GM12878 (cell line): ENCODE measurements at regions of chr5 and their contacts with region 1.

Region 1: DNA sequence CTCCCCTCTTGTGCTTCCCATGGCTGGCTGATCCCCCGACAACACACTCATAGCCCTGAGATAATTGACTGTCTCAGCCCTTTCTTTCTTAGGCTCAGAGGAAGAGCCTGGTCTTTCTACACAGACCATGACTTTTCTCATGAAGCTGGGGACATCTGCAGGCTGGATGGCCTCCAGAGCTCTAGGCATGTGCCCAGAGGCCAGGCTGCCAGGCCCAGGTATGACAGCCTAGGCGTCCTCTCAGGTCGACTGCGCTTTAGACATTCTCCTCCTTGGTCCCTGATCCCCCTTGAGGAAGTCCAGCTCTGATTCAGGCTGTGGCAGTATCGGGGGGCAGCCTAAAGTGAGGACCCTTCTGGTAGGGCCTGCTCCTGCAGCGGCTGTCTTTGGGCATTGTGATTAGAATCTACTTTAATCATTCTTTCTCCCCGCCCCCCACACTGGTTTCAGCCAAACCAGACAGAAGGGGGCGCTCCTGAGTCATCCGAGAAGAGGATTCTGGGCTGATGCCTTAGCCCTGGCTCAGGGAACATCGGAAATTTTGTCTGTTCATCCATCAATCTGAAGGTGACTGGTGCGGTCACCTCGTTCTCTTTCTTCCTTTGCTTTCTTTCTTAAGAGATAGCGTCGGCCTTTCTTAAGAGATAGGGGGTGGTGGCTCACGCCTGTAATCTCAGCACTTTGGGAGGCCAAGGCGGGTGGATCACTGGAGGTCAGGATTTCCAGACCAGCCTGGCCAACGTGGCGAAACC is 66.5 kb upstream of the HSPA9 start:
- DNase-seq: no peak
- ATAC-seq: peak; percentile 91
- H3K4me3 ChIP-seq: no peak overlapping the region
- H3K27ac ChIP-seq: no peak overlapping the region
- H3K4me1 ChIP-seq: no peaks in the 10 kb centered on the region
- H3K27me3 ChIP-seq: no peaks in the 10 kb centered on the region; a peak in 2 of 4 replicates
- CTCF ChIP-seq: peak; percentile 71 to 78 (median 72)
- EP300 ChIP-seq: no peak
- POLR2A ChIP-seq: no peak
- RAD21 ChIP-seq: peak; percentile 86

Region 2: DNA sequence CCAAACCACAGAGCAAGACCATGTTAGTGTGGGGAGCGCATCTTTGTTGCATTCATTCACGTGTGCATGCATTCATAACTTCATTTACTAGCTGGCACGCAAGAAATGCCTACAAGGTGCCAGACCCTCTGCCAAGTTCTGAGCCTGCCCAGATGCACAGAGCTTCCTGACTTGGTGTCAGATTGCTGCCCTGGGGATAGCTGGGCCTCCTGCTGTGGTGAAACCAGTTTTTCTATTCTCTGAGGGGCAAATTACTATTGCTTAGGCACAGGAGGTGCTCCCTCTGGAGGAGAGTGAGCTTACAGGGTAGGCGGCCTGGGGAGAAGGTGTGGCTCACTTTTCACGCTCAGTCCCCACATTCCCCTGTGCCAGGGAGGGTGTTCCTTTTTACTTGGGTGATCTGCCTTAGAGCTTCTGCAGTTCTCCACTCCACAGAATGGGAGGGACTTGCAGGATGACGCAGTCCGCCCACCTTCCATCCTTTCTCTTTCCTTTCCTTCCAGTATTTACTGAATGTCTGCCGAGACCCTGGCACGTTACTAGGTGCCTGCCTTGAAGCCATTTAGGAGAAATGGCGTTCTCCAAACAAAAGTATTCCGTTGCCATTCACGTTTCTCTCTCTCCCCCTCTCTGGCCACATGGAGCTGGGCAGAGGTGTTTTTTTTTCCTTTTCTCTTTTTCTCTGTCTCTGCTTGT is 83.6 kb after region 1 on chr5:
- CTCF ChIA-PET with region 1: no interaction called
- POLR2A ChIA-PET with region 1: no interaction called
- RAD21 ChIA-PET with region 1: no interaction called
- SMC1A ChIA-PET with region 1: no interaction called
- in situ Hi-C with region 1: no loop called
- intact Hi-C with region 1: loop called (anchors 5 kb)
- DNase-seq: no peak
- ATAC-seq: peak; percentile 57
- H3K4me3 ChIP-seq: no peak overlapping the region
- H3K27ac ChIP-seq: no peak overlapping the region
- H3K4me1 ChIP-seq: peaks cover 8% of the 10 kb centered on the region
- H3K27me3 ChIP-seq: no peaks in the 10 kb centered on the region
- CTCF ChIP-seq: no peak
- EP300 ChIP-seq: no peak
- POLR2A ChIP-seq: no peak
- RAD21 ChIP-seq: no peak

Region 3: DNA sequence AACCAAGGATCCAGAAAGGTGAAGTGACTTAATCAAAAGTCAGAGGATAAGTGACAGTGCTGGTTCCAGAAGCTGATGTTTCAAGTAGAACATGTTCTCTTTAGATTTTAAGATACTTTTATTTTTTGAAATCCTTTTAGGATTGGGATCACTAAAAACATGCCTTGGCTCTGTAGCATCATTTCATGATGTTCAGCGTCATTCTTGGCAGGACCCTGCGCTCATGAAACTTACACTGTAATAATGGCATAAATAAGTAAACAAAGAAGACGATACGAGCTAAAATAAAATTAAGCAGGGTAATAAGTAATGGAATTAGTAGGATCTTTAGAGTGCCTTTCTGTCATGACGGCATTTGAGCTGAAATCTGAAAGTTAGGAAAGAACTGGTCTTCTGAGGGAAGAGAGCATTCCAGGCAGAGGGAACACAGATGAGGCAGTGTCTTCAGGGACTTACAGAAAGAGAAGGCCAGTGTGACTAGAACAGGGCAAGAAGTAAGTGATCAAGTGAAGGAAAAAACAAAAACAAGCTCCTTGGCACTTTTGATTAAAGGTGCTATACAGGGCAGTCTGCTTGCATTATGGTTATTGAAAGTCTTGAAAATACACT is 131.4 kb after region 1 on chr5:
- CTCF ChIA-PET with region 1: interaction called, 3 read pairs
- POLR2A ChIA-PET with region 1: no interaction called
- RAD21 ChIA-PET with region 1: interaction called, 5 read pairs
- SMC1A ChIA-PET with region 1: no interaction called
- in situ Hi-C with region 1: no loop called
- intact Hi-C with region 1: loop called (anchors 10 kb)
- DNase-seq: no peak
- ATAC-seq: no peak
- H3K4me3 ChIP-seq: no peak overlapping the region
- H3K27ac ChIP-seq: no peak overlapping the region
- H3K4me1 ChIP-seq: no peaks in the 10 kb centered on the region
- H3K27me3 ChIP-seq: no peaks in the 10 kb centered on the region
- CTCF ChIP-seq: no peak
- EP300 ChIP-seq: no peak
- POLR2A ChIP-seq: no peak
- RAD21 ChIP-seq: no peak

Region 4: GRCh38 chr5:139262742-139263445 is 621.2 kb after region 1 on chr5:
- CTCF ChIA-PET with region 1: interaction called, 6 read pairs
- POLR2A ChIA-PET with region 1: no interaction called
- RAD21 ChIA-PET with region 1: interaction called, 6 read pairs
- SMC1A ChIA-PET with region 1: interaction called, 11 read pairs
- in situ Hi-C with region 1: loop called (anchors 25 kb)
- intact Hi-C with region 1: loop called (anchors 1 kb)
- DNase-seq: peak; percentile 40
- ATAC-seq: peak; percentile 99
- H3K4me3 ChIP-seq: no peak overlapping the region
- H3K27ac ChIP-seq: no peak overlapping the region
- H3K4me1 ChIP-seq: peaks cover 5% of the 10 kb centered on the region
- H3K27me3 ChIP-seq: no peaks in the 10 kb centered on the region; a peak in 1 of 4 replicates
- CTCF ChIP-seq: peak; percentile 83 to 93 (median 85)
- EP300 ChIP-seq: no peak
- POLR2A ChIP-seq: no peak
- RAD21 ChIP-seq: peak; percentile 99